ENCODE measurements at regions of chr10 and their contacts with region 1.

Region 1: GRCh38 chr10:120735773-120736371 is 115.3 kb upstream of the WDR11 start:
- DNase-seq: peak; percentile 8 to 21
- ATAC-seq: peak; percentile 62 to 85; a peak in 4 of 6 replicates
- H3K4me3 ChIP-seq: no peak overlapping the region
- H3K27ac ChIP-seq: no peak overlapping the region
- H3K4me1 ChIP-seq: no peaks in the 10 kb centered on the region
- CTCF ChIP-seq: peak; percentile 57
- EP300 ChIP-seq: no peak
- POLR2A ChIP-seq: no peak
- RAD21 ChIP-seq: peak; percentile 42 to 55; a peak in 4 of 5 replicates

Region 2: DNA sequence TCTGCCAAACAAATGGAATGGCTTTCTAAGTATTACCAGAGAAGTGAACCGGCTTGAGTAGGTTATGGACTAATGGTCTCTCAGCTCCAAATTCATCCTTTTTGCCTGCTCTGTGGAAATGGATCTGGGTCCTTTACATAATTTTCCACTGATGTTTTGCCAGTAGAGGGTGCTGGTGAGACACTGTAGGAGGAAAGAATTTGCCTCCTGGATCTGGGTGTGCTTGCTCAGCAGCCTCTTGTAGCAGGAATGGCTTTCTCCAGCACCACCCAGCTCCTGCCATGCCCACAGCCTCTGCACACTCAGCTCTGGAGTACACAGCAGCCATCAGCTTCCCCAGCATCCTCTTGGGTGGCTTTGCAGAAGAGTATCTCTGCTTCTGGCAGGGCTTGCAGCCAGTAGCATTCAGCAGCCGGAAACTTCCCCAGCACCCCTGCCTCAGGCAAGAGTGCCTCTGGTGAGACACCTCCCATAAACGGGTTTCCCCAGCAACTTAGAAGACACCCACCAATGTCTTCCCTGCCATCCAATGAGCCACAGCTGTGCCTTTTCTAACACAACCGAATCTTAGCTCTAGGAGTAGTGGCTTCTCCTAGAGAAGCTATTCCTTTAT is 513.9 kb before region 1 on chr10:
- CTCF ChIA-PET with region 1: interaction called, 11 read pairs
- POLR2A ChIA-PET with region 1: no interaction called
- DNase-seq: peak; percentile 61 to 65
- ATAC-seq: peak; percentile 87 to 94
- H3K4me3 ChIP-seq: no peak overlapping the region
- H3K27ac ChIP-seq: no peak overlapping the region
- H3K4me1 ChIP-seq: no peaks in the 10 kb centered on the region
- CTCF ChIP-seq: peak; percentile 62
- EP300 ChIP-seq: no peak
- POLR2A ChIP-seq: no peak
- RAD21 ChIP-seq: peak; percentile 57 to 74

Region 3: DNA sequence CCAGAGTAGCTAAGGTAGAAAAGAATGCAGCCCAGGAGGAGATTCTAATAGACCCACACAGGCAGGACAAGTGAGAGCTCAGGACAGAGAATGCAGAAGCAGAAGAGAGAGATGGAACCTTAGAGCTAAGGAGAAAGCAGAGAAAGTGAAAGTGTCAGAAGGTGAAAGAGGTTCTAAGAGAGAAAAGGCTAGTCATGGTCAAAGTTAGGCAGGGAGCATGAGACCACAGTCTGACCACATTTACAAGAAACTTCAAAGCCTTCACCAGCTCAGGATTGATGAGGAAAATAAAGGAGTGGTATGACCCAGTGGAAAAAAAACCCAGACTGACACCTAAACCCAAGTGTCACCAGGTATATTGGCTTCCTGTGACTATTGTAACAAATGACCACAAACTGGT is 16.5 kb before region 1 on chr10:
- CTCF ChIA-PET with region 1: interaction called, 18 read pairs
- POLR2A ChIA-PET with region 1: no interaction called
- DNase-seq: no peak
- ATAC-seq: no peak
- H3K4me3 ChIP-seq: no peak overlapping the region
- H3K27ac ChIP-seq: no peak overlapping the region
- H3K4me1 ChIP-seq: no peaks in the 10 kb centered on the region
- CTCF ChIP-seq: no peak
- EP300 ChIP-seq: no peak
- POLR2A ChIP-seq: no peak
- RAD21 ChIP-seq: no peak

Measured in A549 (cell line).